ENCODE measurements at regions of chr1 and their contacts with region 1.

Region 1: GRCh38 chr1:246261639-246262038 is 245.4 kb downstream of the SMYD3 start:
- DNase-seq: no peak
- H3K4me3 ChIP-seq: no peak overlapping the region
- CTCF ChIP-seq: peak; percentile 12

Region 2: GRCh38 chr1:246035060-246035541 is 226.5 kb before region 1 on chr1:
- in situ Hi-C with region 1: loop called (anchors 25 kb)
- DNase-seq: no peak
- H3K4me3 ChIP-seq: no peak overlapping the region
- CTCF ChIP-seq: no peak